Activated CD8-positive, alpha-beta T cell treated with anti-CD3 and anti-CD28 coated beads, Interleukin-2, amount 10 ng/mL, durations not matched to agents 7 days and 5 days (primary cell): ENCODE measurements at regions of chr17 and their contacts with region 1.

Region 1: DNA sequence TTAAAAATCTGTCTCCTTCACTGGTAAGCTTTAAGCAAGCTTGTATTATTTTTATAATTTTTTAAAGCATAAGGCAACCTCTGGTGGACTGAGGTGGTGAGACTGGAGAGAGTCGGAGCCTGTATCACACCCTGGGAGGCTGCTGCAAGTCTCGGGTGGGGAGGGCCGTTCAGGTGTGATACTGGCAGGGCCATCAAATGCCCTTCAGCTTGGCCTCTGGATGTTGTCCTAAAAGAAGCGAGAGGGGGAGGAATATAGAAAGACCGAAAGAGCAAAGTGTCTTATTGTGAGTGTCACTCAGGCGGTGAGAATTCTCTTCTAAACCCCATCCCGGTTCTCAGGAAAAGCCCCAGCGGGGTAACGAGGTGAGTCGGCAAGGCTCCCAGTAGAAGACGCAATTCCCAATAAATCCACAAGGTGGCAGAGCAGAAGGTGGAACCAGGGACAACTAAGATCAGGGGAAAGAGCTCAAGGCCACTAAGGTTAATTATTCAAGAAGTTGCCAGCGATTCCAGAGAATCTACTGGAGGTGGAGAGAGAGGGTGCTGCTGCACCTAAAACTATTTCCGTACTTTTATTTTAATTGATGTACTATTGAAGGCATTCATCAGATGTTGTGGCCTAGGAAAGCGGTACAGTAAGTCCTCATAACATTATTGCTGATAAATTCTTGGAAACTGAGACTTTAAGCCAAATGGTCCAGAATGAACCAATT is 14.1 kb downstream of the C17orf67 start:
- DNase-seq: peak; percentile 81
- ATAC-seq: peak; percentile 92
- H3K4me3 Mint-ChIP-seq: no peak overlapping the region
- H3K27ac Mint-ChIP-seq: no peak overlapping the region
- H3K4me1 Mint-ChIP-seq: peaks cover 7% of the 10 kb centered on the region
- H3K27me3 Mint-ChIP-seq: no peaks in the 10 kb centered on the region

Region 2: GRCh38 chr17:56786989-56787482 is 32.6 kb before region 1 on chr17:
- CTCF ChIA-PET with region 1: interaction called, 10 read pairs
- POLR2A ChIA-PET with region 1: no interaction called
- DNase-seq: peak; percentile 65
- ATAC-seq: peak; percentile 92
- H3K4me3 Mint-ChIP-seq: no peak overlapping the region
- H3K27ac Mint-ChIP-seq: peak overlapping the region; percentile 75
- H3K4me1 Mint-ChIP-seq: peaks cover 25% of the 10 kb centered on the region
- H3K27me3 Mint-ChIP-seq: peaks cover under 1% of the 10 kb centered on the region

Region 3: DNA sequence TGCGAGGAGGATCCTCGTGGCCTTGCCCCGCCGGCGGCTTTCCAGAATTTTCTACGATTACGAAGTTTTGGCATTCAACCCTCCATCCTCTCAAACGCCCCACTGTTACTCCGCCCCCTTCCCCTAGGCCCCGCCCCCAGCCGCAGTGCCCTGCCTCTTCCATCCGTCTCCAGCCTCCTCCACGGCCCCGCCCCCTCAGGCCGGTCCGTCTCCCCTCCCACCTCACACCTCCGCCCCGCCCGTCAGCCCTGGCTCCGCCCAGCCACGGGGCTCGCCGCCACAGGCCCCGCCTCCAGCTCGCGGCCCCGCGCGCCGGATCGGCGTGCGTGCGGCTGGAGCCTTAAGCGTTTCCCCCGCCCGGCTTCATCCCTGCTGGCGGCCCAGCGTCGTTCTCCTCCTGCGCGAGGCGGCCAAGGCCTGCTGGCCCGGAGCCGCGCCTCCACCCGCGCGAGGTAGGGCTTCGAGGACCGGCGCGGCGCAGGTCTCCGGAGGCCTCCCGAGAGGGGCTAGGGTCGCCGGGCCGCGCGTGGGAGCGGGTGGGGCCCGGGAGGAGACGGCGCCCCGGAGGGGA is 14.3 kb after region 1 on chr17 and contains the starts of genes C17orf67 and DGKE:
- CTCF ChIA-PET with region 1: interaction called, 56 read pairs
- POLR2A ChIA-PET with region 1: interaction called, 10 read pairs
- DNase-seq: peak; percentile 99
- ATAC-seq: peak; percentile 82
- H3K4me3 Mint-ChIP-seq: peak within 1 kb of the TSS; percentile 94
- H3K27ac Mint-ChIP-seq: peak within 1 kb of the TSS; percentile 95
- H3K4me1 Mint-ChIP-seq: peaks cover 55% of the 10 kb centered on the region
- H3K27me3 Mint-ChIP-seq: no peaks in the 10 kb centered on the region
- total RNA-seq, gene C17orf67: 3.1 to 3.2 TPM
- total RNA-seq, gene DGKE: 30.8 to 31.1 TPM

Region 4: DNA sequence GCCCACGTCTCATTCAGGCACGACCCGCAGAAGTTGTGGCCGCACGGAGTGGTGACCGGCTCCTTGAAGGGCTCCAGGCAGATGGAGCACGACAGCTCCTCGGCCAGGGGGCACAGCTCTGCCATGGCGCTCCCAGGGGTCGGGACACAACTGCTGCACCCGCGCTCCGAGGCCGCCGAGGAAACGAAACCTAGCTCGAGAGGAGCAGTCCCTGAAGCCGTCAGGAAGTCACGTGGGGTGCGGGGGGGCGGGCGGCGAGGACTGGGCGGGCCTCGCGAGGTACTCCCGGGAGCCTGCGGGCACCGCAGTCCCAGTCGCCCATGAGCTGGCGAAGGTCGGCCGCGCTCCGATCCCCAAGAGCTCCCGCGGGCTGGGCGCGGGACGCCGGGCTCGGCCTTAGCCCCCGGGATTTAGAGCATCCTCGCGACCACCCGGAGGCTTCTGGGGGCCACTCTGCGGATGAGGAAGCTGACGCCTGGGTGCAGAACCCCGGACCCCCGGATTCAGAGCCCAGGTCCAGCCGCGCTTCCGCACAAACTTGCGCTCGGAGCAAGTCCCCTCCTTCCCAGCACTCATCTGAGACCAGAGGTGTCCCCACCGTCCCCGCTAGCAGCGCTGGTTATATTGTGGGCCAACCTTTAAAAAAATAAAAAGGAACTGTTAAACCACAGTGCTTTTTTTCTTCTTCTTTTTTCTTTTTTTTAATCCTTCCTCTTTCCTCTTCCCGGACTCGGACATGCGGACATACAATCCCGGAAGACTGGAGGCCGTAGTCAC is 94.5 kb after region 1 on chr17 and contains the start of gene TRIM25:
- CTCF ChIA-PET with region 1: interaction called, 16 read pairs
- POLR2A ChIA-PET with region 1: no interaction called
- DNase-seq: peak; percentile 95
- ATAC-seq: peak; percentile 89
- H3K4me3 Mint-ChIP-seq: peak within 1 kb of the TSS; percentile 86
- H3K27ac Mint-ChIP-seq: peak within 1 kb of the TSS; percentile 96
- H3K4me1 Mint-ChIP-seq: peaks cover 44% of the 10 kb centered on the region
- H3K27me3 Mint-ChIP-seq: no peaks in the 10 kb centered on the region
- total RNA-seq, gene TRIM25: 131 to 142 TPM

Region 5: GRCh38 chr17:56939901-56940343 is 120.3 kb after region 1 on chr17:
- CTCF ChIA-PET with region 1: interaction called, 64 read pairs
- POLR2A ChIA-PET with region 1: no interaction called
- DNase-seq: no peak
- ATAC-seq: peak; percentile 70
- H3K4me3 Mint-ChIP-seq: no peak overlapping the region
- H3K27ac Mint-ChIP-seq: peak overlapping the region; percentile 57
- H3K4me1 Mint-ChIP-seq: peaks cover 23% of the 10 kb centered on the region
- H3K27me3 Mint-ChIP-seq: no peaks in the 10 kb centered on the region

Region 6: GRCh38 chr17:56948491-56948890 is 128.9 kb after region 1 on chr17:
- CTCF ChIA-PET with region 1: interaction called, 64 read pairs
- POLR2A ChIA-PET with region 1: no interaction called
- DNase-seq: no peak
- ATAC-seq: no peak
- H3K4me3 Mint-ChIP-seq: no peak overlapping the region
- H3K27ac Mint-ChIP-seq: no peak overlapping the region
- H3K4me1 Mint-ChIP-seq: peaks cover 17% of the 10 kb centered on the region
- H3K27me3 Mint-ChIP-seq: no peaks in the 10 kb centered on the region

Region 7: GRCh38 chr17:57009737-57010445 is 190.3 kb after region 1 on chr17:
- CTCF ChIA-PET with region 1: interaction called, 10 read pairs
- POLR2A ChIA-PET with region 1: no interaction called
- DNase-seq: peak; percentile 69
- ATAC-seq: peak; percentile 91
- H3K4me3 Mint-ChIP-seq: no peak overlapping the region
- H3K27ac Mint-ChIP-seq: no peak overlapping the region
- H3K4me1 Mint-ChIP-seq: peaks cover 22% of the 10 kb centered on the region
- H3K27me3 Mint-ChIP-seq: peaks cover 21% of the 10 kb centered on the region